H1 (cell line): ENCODE measurements at regions of chr14 and their contacts with region 1.

Region 1: GRCh38 chr14:95664546-95664945 is 21.7 kb upstream of the TCL1B start:
- DNase-seq: no peak
- H3K4me3 ChIP-seq: no peak overlapping the region
- H3K27ac ChIP-seq: no peak overlapping the region
- H3K4me1 ChIP-seq: peaks cover 0 to 8% (median 6%) of the 10 kb centered on the region in 4 experiments; a peak in 6 of 7 replicates
- H3K27me3 ChIP-seq: peaks cover 0 to 3% (median 1%) of the 10 kb centered on the region in 4 experiments; a peak in 5 of 7 replicates
- CTCF ChIP-seq: no peak
- EP300 ChIP-seq: no peak
- POLR2A ChIP-seq: no peak
- RAD21 ChIP-seq: no peak

Region 2: DNA sequence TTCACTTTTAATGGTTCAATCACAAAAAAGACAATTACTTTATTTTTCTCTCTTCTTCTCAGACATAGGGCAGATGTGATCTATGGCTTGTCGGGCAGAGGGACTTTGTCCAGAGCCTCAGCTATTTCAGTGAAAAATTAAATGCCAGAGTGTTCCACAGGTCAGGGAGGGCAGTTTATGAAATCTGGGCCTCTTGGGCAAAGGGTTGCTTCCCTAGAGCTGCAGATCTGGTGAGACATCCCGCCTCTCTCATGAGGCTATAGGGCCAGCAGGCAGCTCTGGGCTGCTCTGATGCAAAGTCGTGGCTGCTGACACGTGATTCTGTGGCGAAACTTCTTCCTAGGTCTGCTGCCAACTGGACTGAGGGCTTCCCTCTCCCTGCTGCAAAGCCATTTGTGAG is 350.8 kb before region 1 on chr14:
- CTCF ChIA-PET with region 1: no interaction called
- POLR2A ChIA-PET with region 1: no interaction called
- DNase-seq: no peak
- H3K4me3 ChIP-seq: no peak overlapping the region
- H3K27ac ChIP-seq: no peak overlapping the region
- H3K4me1 ChIP-seq: peaks cover 0 to 2% (median 0%) of the 10 kb centered on the region in 4 experiments; a peak in 2 of 7 replicates
- H3K27me3 ChIP-seq: peaks cover 0 to 9% (median 6%) of the 10 kb centered on the region in 4 experiments; a peak in 5 of 7 replicates
- CTCF ChIP-seq: no peak
- EP300 ChIP-seq: no peak
- POLR2A ChIP-seq: no peak
- RAD21 ChIP-seq: no peak

Region 3: GRCh38 chr14:95652690-95653089 is 11.9 kb before region 1 on chr14:
- CTCF ChIA-PET with region 1: interaction called, 12 read pairs
- POLR2A ChIA-PET with region 1: interaction called, 3 read pairs
- DNase-seq: no peak
- H3K4me3 ChIP-seq: no peak overlapping the region
- H3K27ac ChIP-seq: no peak overlapping the region
- H3K4me1 ChIP-seq: peaks cover 0 to 5% (median 2%) of the 10 kb centered on the region in 4 experiments; a peak in 2 of 7 replicates
- H3K27me3 ChIP-seq: no peaks in the 10 kb centered on the region
- CTCF ChIP-seq: no peak
- EP300 ChIP-seq: no peak
- POLR2A ChIP-seq: no peak
- RAD21 ChIP-seq: no peak

Region 4: GRCh38 chr14:95675486-95675885 is 10.9 kb after region 1 on chr14:
- CTCF ChIA-PET with region 1: interaction called, 46 read pairs
- POLR2A ChIA-PET with region 1: no interaction called
- DNase-seq: no peak
- H3K4me3 ChIP-seq: no peak overlapping the region
- H3K27ac ChIP-seq: no peak overlapping the region
- H3K4me1 ChIP-seq: peaks cover 1 to 11% (median 3%) of the 10 kb centered on the region in 4 experiments; a peak in 5 of 7 replicates
- H3K27me3 ChIP-seq: no peaks in the 10 kb centered on the region; a peak in 3 of 7 replicates
- CTCF ChIP-seq: no peak
- EP300 ChIP-seq: no peak
- POLR2A ChIP-seq: no peak
- RAD21 ChIP-seq: no peak

Region 5: DNA sequence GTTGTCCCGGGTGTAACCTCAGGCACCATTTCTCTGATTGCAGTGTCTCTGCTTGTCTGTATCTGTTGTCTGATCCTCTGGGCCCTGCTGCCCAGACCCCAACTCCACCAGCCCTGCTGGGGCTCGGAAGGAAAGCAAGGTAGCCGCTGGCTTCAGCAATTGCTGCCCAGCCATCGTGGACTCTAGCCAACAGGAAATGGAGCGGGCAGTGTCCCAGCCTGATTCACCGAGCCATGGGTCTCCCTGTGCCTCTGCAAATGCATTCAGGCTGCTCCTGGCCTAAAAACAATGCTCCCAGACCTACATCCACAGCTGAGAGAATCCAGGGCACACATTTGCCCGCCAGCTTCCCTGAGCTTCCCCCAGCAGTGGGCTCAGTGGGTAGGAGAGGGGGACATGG is 221.3 kb after region 1 on chr14:
- CTCF ChIA-PET with region 1: no interaction called
- POLR2A ChIA-PET with region 1: no interaction called
- DNase-seq: no peak
- H3K4me3 ChIP-seq: no peak overlapping the region
- H3K27ac ChIP-seq: no peak overlapping the region
- H3K4me1 ChIP-seq: peaks cover 2 to 15% (median 7%) of the 10 kb centered on the region in 4 experiments
- H3K27me3 ChIP-seq: no peaks in the 10 kb centered on the region; a peak in 1 of 7 replicates
- CTCF ChIP-seq: no peak
- EP300 ChIP-seq: no peak
- POLR2A ChIP-seq: no peak
- RAD21 ChIP-seq: no peak